Breast epithelium (tissue), 4 donors: ENCODE measurements at regions of chr4 and their contacts with region 1.

Region 1: GRCh38 chr4:183014361-183015084 is 84.5 kb upstream of the WWC2 start:
- DNase-seq: no peak
- H3K4me3 ChIP-seq: no peak overlapping the region
- H3K27ac ChIP-seq: no peak overlapping the region
- H3K4me1 ChIP-seq: no peaks in the 10 kb centered on the region
- H3K27me3 ChIP-seq: peaks cover 0 to 8% of the 10 kb centered on the region in 2 donors
- CTCF ChIP-seq: no peak
- POLR2A ChIP-seq: no peak

Region 2: GRCh38 chr4:182074842-182075241 is 939.7 kb before region 1 on chr4:
- intact Hi-C with region 1: loop called (anchors 5 kb)
- DNase-seq: no peak
- H3K4me3 ChIP-seq: no peak overlapping the region
- H3K27ac ChIP-seq: no peak overlapping the region
- H3K4me1 ChIP-seq: no peaks in the 10 kb centered on the region
- H3K27me3 ChIP-seq: no peaks in the 10 kb centered on the region
- CTCF ChIP-seq: no peak
- POLR2A ChIP-seq: no peak